ENCODE measurements at regions of chr5 and their contacts with region 1.

Region 1: GRCh38 chr5:17189381-17190036 is 27.9 kb upstream of the BASP1 start:
- DNase-seq: peak; percentile 24 to 54
- ATAC-seq: peak in 1 of 2 donors; percentile 47
- H3K4me3 ChIP-seq: no peak overlapping the region
- H3K27ac ChIP-seq: peak overlapping the region in 1 of 4 donors; percentile 3
- H3K4me1 ChIP-seq: peaks cover 15 to 28% of the 10 kb centered on the region in 2 donors
- H3K27me3 ChIP-seq: no peaks in the 10 kb centered on the region
- CTCF ChIP-seq: peak; percentile 64 to 87 (median 76)
- POLR2A ChIP-seq: no peak

Region 2: DNA sequence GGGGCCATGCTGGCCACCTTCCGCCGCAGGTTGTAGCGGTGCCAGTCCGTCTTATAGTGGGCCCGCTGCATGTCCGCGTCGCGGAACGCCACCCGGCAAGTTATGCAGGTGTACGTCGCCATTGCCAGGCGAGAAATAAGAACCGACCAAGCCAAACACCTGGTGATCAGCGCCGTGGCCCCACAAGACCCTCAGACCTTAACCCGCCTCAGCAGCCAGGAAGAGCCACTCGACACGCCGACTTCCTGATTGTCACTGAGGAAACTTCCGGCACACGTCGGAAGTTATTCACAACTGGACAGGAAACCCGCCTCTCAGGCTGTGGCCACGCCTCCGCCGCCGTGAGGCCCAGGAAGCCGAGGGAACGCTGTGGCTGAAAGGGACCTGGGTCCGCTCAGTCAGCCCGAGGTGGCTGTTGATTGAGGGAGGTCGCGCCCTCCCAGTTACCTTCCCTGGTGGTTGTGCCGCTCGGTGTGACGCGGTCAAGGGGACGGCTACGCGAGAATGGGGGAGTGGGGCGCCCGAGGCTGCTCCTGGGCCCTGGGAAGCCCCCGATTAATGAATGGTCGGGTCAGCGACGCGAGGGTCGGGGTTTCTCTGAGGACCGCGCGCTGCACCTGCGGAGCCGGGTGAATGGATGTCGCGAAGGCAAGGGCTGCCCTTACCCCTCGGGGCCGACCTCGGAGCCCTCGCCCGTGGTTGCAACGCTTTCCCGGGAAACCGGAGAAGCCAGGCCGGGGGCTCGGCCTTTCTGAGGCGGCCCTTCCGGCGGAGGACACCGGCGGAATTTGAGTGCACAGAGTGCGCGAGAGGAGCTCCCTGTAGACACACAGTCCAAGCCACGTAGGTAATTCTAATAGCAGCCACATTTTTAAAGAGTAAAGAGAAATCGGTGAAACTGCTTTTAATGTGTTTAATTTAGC is 723.7 kb before region 1 on chr5 and contains the start of gene ZNF622:
- in situ Hi-C with region 1: loop called in 3 of 4 experiments (anchors 25 kb)
- intact Hi-C with region 1: no loop called
- DNase-seq: peak; percentile 87 to 91
- ATAC-seq: peak; percentile 51 to 74
- H3K4me3 ChIP-seq: peak within 1 kb of the TSS; percentile 78 to 97 (median 92)
- H3K27ac ChIP-seq: peak within 1 kb of the TSS; percentile 87 to 94 (median 92)
- H3K4me1 ChIP-seq: peaks cover 84 to 85% of the 10 kb centered on the region in 2 donors
- H3K27me3 ChIP-seq: no peaks in the 10 kb centered on the region
- CTCF ChIP-seq: no peak
- POLR2A ChIP-seq: peak; percentile 92 to 96
- total RNA-seq, gene ZNF622: 44.8 to 150 (median 75.1) TPM

Region 3: GRCh38 chr5:16574789-16575721 is 614.5 kb before region 1 on chr5:
- in situ Hi-C with region 1: no loop called
- intact Hi-C with region 1: loop called (anchors 10 kb)
- DNase-seq: peak; percentile 62 to 76
- ATAC-seq: peak; percentile 81 to 92
- H3K4me3 ChIP-seq: no peak overlapping the region
- H3K27ac ChIP-seq: peak overlapping the region; percentile 72 to 83 (median 76)
- H3K4me1 ChIP-seq: peaks cover 15 to 29% of the 10 kb centered on the region in 2 donors
- H3K27me3 ChIP-seq: no peaks in the 10 kb centered on the region
- CTCF ChIP-seq: no peak
- POLR2A ChIP-seq: no peak

Region 4: GRCh38 chr5:16784843-16785791 is 404.4 kb before region 1 on chr5:
- in situ Hi-C with region 1: loop called (anchors 5 kb)
- intact Hi-C with region 1: no loop called
- DNase-seq: peak in 1 of 2 donors; percentile 63
- ATAC-seq: peak; percentile 90 to 93
- H3K4me3 ChIP-seq: no peak overlapping the region
- H3K27ac ChIP-seq: peak overlapping the region; percentile 71 to 86 (median 79)
- H3K4me1 ChIP-seq: peaks cover 13 to 19% of the 10 kb centered on the region in 2 donors
- H3K27me3 ChIP-seq: no peaks in the 10 kb centered on the region
- CTCF ChIP-seq: no peak
- POLR2A ChIP-seq: no peak

Region 5: DNA sequence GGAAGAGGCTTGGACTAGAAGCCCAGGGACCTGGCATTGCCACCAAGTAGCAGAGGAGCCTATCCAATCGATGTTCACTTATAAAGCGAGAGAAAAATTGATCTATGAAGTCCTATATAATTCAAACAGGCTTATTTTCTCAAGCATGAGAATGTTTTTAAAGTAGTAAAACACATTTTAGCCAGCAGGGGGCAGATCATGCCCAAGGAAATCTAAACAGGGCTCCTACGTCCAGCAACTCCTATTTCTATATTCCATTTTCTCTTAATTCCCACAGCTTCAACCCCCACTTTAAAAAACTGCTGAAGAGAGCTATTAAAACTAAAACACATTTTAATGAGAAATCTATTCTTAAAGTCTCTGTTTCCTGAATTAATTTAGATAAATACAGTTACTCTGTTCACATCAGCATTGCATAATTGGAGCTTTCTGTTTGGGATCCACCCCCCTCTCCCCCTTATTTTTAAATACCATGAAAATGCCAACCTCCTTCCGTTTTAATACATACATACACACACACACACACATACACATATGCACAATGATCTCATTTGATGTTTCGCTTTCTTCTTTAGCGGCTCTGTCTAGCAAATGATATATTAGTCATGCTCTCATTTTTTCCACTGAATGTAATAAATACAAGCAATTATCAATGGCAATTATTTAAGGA is 398.3 kb before region 1 on chr5:
- in situ Hi-C with region 1: loop called (anchors 5 kb)
- intact Hi-C with region 1: loop called (anchors 1 kb)
- DNase-seq: no peak
- ATAC-seq: peak; percentile 64 to 83
- H3K4me3 ChIP-seq: peak overlapping the region; percentile 28 to 37 (median 32)
- H3K27ac ChIP-seq: peak overlapping the region in 2 of 4 donors; percentile 3 to 39
- H3K4me1 ChIP-seq: peaks cover 0 to 6% of the 10 kb centered on the region in 2 donors
- H3K27me3 ChIP-seq: no peaks in the 10 kb centered on the region
- CTCF ChIP-seq: peak; percentile 77 to 83 (median 79)
- POLR2A ChIP-seq: no peak

Region 6: GRCh38 chr5:17132444-17133083 is 56.9 kb before region 1 on chr5:
- in situ Hi-C with region 1: no loop called
- intact Hi-C with region 1: loop called (anchors 5 kb)
- DNase-seq: no peak
- ATAC-seq: no peak
- H3K4me3 ChIP-seq: no peak overlapping the region
- H3K27ac ChIP-seq: no peak overlapping the region
- H3K4me1 ChIP-seq: no peaks in the 10 kb centered on the region
- H3K27me3 ChIP-seq: no peaks in the 10 kb centered on the region
- CTCF ChIP-seq: peak; percentile 46 to 67 (median 59)
- POLR2A ChIP-seq: no peak

Measured in gastrocnemius medialis (tissue), 4 donors.